ENCODE measurements at regions of chr16 and their contacts with region 1.

Region 1: DNA sequence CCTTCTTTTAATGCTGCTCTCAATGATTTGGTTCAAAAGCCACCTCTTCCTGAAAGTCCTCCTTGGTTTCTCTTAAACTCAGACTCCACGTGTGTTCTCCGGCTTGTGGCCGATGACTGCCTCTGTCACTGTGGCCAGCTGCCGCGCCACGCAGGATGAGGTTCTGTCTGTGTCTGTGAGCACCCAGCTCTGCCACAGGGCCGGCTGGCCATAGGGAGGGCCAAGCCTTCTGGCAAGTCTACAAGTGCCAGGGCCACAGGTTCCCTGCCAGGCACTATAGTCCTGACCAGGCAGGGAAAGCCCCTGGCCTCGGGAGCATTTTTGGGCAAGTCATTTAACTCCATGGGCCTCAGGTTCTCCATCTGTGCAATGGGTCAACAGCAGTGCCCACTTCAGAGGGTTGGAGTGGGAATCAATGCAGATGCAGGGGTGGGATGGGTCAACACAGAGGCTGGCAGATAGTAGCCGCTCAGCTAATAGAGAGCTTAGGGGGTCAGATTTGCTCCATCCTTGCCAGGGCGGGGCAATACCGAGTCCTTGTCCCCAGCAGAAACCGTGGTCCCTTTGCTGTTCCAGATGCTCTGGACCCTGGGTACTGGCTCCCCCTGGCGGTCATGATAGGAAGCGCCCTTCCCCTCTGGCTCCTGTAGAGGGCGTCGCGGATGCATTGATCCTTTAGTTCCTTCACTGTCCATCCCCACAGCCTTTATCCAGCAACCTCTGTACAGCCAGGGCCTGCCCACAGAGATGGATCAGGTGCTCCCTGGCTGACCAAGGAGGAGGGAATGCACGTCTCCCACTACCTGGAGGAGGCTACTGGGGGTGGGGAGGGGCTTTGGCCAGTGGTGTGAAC is 19.3 kb upstream of the ADGRG3 start:
- DNase-seq: peak in 8 of 10 donors; percentile 67 to 87 (median 81)
- H3K4me3 ChIP-seq: no peak overlapping the region
- H3K27ac ChIP-seq: peak overlapping the region in 44 of 59 donors; percentile 8 to 85 (median 68)
- H3K27me3 ChIP-seq: no peaks in the 10 kb centered on the region
- CTCF ChIP-seq: peak; percentile 84 to 100 (median 100)

Region 2: GRCh38 chr16:57591086-57591869 is 57.5 kb before region 1 on chr16:
- intact Hi-C with region 1: loop called in 1 of 2 experiments (anchors 2 kb)
- DNase-seq: peak in 9 of 10 donors; percentile 55 to 78 (median 71)
- H3K4me3 ChIP-seq: no peak overlapping the region
- H3K27ac ChIP-seq: no peak overlapping the region
- H3K27me3 ChIP-seq: no peaks in the 10 kb centered on the region
- CTCF ChIP-seq: peak; percentile 58 to 98 (median 92)

Region 3: GRCh38 chr16:57600048-57600835 is 48.6 kb before region 1 on chr16:
- intact Hi-C with region 1: loop called (anchors 2 to 5 kb)
- DNase-seq: peak in 5 of 10 donors; percentile 12 to 67 (median 44)
- H3K4me3 ChIP-seq: no peak overlapping the region
- H3K27ac ChIP-seq: peak overlapping the region in 1 of 59 donors; percentile 3
- H3K27me3 ChIP-seq: peaks cover 0 to 3% (median 0%) of the 10 kb centered on the region in 45 donors
- CTCF ChIP-seq: peak; percentile 26 to 82 (median 64)

Region 4: DNA sequence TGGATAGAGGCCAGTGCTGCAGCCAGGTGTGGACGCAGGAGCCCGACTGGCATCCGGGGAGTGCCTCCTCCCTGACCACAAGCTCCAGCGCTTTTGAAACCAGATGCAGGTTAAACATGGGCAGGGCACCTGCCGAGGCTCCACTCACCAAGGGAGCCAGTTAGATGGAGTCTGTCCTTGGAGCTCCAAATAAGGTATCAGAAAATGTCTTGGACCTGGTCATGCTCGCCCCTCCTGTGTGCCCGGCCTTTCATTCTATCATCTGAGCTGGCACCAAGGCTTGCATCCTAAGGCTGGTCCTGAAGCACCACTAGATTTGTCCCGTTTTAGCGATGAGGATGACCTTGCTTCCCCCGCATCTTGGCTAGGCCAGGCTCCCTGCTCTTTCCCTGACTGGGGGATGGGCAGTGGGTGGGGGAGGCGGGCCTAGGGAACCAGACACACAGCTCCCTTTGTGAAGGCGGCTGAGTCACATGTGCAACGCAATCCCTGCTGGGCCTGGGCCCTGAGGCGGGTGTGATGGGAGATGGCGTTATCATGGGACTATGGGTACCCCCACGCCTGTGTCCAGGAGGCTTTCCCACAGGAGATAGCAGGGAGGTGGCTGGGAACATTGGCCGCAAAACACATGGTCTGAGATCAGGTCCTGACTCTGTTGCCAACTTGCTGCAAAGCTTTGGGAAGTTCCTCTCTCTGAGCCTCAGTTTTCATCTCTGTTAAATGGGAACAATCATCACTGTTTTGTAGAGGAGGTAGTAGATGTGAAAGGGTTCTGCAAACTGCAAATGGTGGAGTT is 25.4 kb before region 1 on chr16:
- intact Hi-C with region 1: loop called (anchors 1 to 2 kb)
- DNase-seq: peak in 9 of 10 donors; percentile 85 to 93 (median 89)
- H3K4me3 ChIP-seq: peak overlapping the region in 3 of 59 donors; percentile 0 to 15 (median 3)
- H3K27ac ChIP-seq: peak overlapping the region; percentile 53 to 96 (median 86)
- H3K27me3 ChIP-seq: no peaks in the 10 kb centered on the region
- CTCF ChIP-seq: peak in 6 of 56 donors; percentile 3 to 31 (median 16)

Measured in dorsolateral prefrontal cortex (tissue), 120 donors.